Activated T-helper 2 cell treated with anti-CD3 and anti-CD28 coated beads, Interferon-gamma antibody, Interleukin-2, Interleukin-4, amounts not matched to agents 10 μg/mL and 5 μg/mL and 100 μg/mL, durations not matched to agents 14 hours and 24 hours and 36 hours (primary cell): ENCODE measurements at regions of chr2 and their contacts with region 1.

Region 1: DNA sequence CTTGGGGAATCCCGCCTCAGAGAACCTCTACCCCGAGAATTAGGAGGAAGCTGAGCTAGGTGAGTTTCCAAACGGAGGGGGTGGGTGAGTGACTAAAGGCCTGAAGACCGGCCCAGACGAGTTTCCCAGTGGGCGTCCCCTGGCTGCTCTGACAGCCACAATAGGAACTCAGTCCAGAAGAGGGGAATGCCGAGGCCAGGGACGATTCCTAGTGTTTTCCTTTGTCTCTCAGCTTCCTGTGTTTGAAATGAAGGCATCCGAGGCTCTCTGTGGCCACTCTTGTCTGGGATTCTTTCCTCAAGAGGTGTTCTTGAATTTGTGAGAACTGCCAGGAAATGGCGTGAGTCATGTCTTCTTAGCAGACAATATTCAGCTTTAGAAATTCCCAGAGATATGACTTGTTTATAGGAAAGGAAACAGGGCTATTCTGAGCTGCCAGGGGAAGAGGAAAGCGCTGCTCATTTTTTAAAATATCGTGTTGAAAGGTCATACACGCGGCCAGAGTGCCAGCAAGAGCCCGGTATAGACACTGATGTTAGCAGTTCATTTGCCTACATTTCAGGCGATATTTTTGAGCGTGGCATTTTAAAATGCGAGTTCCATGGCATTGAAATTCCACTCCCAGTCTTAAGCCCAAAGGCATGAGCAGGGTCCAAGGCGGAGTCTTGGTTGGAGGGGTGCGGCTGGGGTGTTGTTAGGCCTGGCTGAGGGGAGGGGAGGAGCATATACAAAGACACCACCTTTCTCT is 169.1 kb upstream of the KLF7 start:
- DNase-seq: no peak
- H3K4me3 Mint-ChIP-seq: peak overlapping the region; percentile 26
- H3K27ac Mint-ChIP-seq: peak overlapping the region; percentile 93
- H3K4me1 Mint-ChIP-seq: peaks cover 74% of the 10 kb centered on the region
- H3K27me3 Mint-ChIP-seq: no peaks in the 10 kb centered on the region

Region 2: GRCh38 chr2:207166039-207166348 is 168.8 kb before region 1 on chr2:
- intact Hi-C with region 1: loop called (anchors 1 kb)
- DNase-seq: peak; percentile 99
- H3K4me3 Mint-ChIP-seq: peak overlapping the region; percentile 98
- H3K27ac Mint-ChIP-seq: peak overlapping the region; percentile 97
- H3K4me1 Mint-ChIP-seq: peaks cover 46% of the 10 kb centered on the region
- H3K27me3 Mint-ChIP-seq: no peaks in the 10 kb centered on the region

Region 3: DNA sequence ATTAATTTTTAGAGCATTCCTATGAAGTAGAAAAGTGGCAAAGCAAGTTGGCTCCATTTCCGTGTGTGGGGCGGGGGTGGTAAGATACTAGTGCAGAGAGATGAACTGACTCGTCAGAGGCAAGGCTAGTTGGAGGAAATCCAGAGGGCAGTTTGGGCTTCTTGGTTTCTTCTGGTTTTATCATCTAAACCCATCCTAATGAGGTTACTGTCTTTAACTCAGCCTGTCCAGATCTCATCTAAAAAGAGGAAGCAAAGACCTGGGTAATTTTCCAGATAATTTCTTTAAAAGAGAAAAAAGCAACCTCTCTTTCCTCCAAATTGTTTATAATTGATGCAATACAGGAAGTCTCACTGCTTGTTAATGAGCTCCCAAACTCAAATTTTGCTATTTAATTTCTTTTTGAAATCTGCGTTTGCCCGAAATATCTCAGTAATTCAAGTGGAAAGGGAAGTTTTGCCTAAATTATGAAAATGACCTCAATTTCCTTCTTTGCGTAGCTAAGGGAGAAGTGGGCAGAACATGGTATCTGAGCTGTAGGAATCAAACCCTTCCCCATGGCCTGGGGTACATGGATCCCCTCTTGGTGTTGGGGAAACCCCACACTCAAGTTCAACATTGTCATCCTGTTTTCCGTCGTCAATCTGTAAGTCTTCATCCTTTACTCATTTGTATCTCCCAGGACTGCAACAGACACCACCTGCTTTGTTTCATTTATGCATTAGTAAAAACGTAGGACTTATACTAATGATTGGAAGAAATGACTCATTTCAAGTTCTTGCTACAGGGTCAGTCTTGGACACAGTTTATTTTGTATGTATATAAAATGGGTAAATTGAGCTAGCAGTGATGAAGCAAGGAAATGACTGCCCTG is 80.0 kb before region 1 on chr2:
- intact Hi-C with region 1: loop called (anchors 1 kb)
- DNase-seq: no peak
- H3K4me3 Mint-ChIP-seq: no peak overlapping the region
- H3K27ac Mint-ChIP-seq: peak overlapping the region; percentile 81
- H3K4me1 Mint-ChIP-seq: peaks cover 69% of the 10 kb centered on the region
- H3K27me3 Mint-ChIP-seq: no peaks in the 10 kb centered on the region

Region 4: DNA sequence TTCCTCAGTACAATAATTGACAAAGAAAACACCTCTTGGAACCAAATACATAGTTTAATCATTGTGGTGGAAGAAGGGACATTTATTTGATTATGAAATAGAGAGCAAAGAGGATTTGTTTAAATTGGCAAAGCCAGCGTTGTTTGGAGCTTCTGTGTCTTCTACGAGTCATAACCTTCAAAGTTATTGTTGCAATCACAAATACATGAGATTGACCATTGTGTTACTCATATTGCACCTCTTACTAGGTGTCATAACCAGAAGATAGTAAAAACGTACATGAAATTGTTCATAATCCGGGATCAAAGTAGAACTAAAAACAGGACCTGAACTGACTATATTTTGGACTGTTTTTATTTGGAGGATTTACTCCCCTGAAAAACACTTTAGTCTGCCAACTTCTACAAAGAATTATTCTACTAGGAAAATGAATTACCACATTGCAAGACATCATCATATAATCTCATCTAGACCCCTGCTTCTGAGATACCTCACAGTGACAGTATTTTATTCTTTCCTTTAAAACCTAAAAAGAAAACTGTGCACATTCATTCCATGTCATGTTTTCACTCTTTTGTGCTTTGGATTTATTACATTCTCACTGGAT is 17.3 kb before region 1 on chr2:
- intact Hi-C with region 1: loop called (anchors 1 kb)
- DNase-seq: no peak
- H3K4me3 Mint-ChIP-seq: no peak overlapping the region
- H3K27ac Mint-ChIP-seq: peak overlapping the region; percentile 77
- H3K4me1 Mint-ChIP-seq: peaks cover 64% of the 10 kb centered on the region
- H3K27me3 Mint-ChIP-seq: no peaks in the 10 kb centered on the region

Region 5: DNA sequence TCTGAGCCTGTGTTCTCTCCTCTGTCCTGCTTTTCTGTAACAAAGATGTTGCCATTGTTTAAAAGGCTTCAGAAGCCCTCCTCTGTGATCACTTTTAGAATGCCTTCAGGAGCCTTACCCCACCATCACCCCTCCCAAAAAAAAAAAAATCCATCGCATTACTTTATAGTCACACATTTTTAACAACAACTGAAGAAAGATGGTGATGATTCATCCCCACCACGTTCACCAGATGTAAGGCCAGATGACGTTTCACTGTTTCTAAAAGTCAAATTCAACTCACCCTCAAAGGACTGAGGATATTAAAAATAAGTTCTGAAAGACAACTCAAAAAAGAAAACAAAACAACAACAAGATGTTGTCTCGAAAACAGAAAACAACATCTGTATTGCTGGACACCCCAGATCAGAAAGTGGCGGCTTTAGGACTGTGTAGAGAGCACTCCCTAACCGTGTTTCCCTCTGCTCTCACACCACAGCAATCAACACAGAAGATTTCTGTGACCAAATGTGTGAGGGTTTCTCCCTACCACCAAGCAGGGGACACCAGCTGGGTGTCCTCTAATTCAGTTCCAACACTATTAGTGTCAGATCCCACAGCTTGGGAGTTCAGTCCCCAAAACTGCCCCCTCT is 133.0 kb after region 1 on chr2:
- intact Hi-C with region 1: loop called (anchors 2 kb)
- DNase-seq: no peak
- H3K4me3 Mint-ChIP-seq: no peak overlapping the region
- H3K27ac Mint-ChIP-seq: peak overlapping the region; percentile 83
- H3K4me1 Mint-ChIP-seq: peaks cover 39% of the 10 kb centered on the region
- H3K27me3 Mint-ChIP-seq: no peaks in the 10 kb centered on the region